ENCODE measurements at regions of chr6 and their contacts with region 1.

Region 1: GRCh38 chr6:134714679-134715421 is 235.1 kb downstream of the ALDH8A1 start:
- DNase-seq: peak in 1 of 2 experiments; percentile 72
- H3K4me3 ChIP-seq: no peak overlapping the region
- H3K27ac ChIP-seq: no peak overlapping the region
- H3K4me1 ChIP-seq: 0 out of 2 replicates have a peak, but pooled peaks cover 7% of the 10 kb centered on the region
- H3K27me3 ChIP-seq: no peaks in the 10 kb centered on the region
- CTCF ChIP-seq: no peak

Region 2: GRCh38 chr6:133062077-133062476 is 1652.8 kb before region 1 on chr6:
- CTCF ChIA-PET with region 1: no interaction called
- POLR2A ChIA-PET with region 1: no interaction called
- intact Hi-C with region 1: no loop called
- DNase-seq: no peak
- H3K4me3 ChIP-seq: no peak overlapping the region
- H3K27ac ChIP-seq: no peak overlapping the region
- H3K4me1 ChIP-seq: no peaks in the 10 kb centered on the region
- H3K27me3 ChIP-seq: no peaks in the 10 kb centered on the region
- CTCF ChIP-seq: no peak

Region 3: DNA sequence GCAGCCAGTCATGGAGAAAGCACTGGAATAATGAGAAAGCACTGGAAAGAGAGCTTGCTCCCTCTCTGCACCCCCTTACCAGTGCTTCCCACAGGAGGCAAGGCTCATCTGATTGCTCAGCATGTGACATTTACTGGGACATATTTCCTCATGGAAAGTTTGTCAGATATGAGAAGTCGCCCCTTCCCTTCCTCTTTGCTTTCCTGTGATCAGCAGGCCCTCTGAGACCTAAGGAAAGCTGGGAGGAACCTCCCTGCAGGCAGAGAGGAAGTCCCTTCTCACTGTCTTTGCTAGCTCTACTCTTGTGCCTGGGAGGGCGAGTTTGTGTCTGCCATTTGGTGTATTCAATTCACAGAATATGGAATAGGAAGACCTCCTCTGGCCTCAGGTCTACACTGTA is 48.7 kb before region 1 on chr6:
- CTCF ChIA-PET with region 1: no interaction called
- POLR2A ChIA-PET with region 1: interaction called, 17 read pairs
- intact Hi-C with region 1: no loop called
- DNase-seq: no peak
- H3K4me3 ChIP-seq: no peak overlapping the region
- H3K27ac ChIP-seq: no peak overlapping the region
- H3K4me1 ChIP-seq: peaks cover 5% of the 10 kb centered on the region; the same call in 1 of the 2 replicates
- H3K27me3 ChIP-seq: no peaks in the 10 kb centered on the region
- CTCF ChIP-seq: no peak